ENCODE measurements at regions of chr2 and their contacts with region 1.

Region 1: GRCh38 chr2:121019071-121019470 is 265.9 kb downstream of the TFCP2L1 start:
- DNase-seq: peak in 2 of 5 donors; percentile 34 to 37
- ATAC-seq: peak in 3 of 4 donors; percentile 35 to 52 (median 48)
- H3K4me3 ChIP-seq: peak overlapping the region in 5 of 12 donors; percentile 11 to 33 (median 15)
- H3K27ac ChIP-seq: no peak overlapping the region
- H3K4me1 ChIP-seq: peaks cover 0 to 4% (median 0%) of the 10 kb centered on the region in 12 donors
- H3K27me3 ChIP-seq: peaks cover 0 to 10% (median 0%) of the 10 kb centered on the region in 9 donors
- CTCF ChIP-seq: no peak
- POLR2A ChIP-seq: no peak

Region 2: DNA sequence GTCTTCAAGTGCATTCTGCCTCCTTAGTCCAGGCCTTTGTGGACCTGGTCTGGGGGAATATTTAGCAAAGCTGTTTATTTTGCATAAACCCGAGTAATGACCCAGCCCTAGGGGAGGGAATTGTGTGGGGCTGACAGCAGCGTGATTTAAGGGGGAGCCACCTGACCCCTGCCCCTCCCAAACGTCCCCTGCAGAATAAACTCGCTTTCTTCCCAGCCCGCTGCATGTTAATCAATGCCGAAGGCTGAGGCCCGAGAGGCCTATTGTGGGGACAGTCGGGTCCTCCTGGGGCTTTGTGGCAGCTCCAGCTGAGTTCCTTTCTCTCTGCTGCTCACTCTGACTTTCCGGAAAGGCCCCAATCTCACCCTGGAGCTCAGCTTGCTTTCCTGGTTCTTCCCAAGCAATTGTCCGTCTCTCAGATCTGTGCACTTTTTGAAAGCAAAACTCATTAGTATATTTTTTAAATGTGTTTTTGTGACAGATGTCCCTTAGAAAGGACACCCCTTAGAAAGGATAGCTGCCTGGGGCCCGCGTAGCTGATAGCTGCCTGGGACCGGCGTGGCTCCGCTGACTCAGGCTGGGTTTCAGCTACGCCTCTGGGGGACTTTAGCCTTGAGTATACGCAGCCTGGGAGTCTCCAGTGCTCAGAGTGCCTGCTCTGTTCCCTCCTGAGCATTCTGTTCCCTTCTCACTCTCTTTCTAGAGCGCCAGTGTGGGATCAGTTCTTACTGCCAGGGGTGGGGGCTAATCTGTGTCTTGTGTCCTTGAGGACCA is 125.1 kb before region 1 on chr2:
- intact Hi-C with region 1: no loop called
- DNase-seq: peak in 1 of 5 donors; percentile 19
- ATAC-seq: peak in 1 of 4 donors; percentile 21
- H3K4me3 ChIP-seq: no peak overlapping the region
- H3K27ac ChIP-seq: peak overlapping the region in 3 of 12 donors; percentile 26 to 59 (median 49)
- H3K4me1 ChIP-seq: peaks cover 0 to 14% (median 6%) of the 10 kb centered on the region in 12 donors
- H3K27me3 ChIP-seq: no peaks in the 10 kb centered on the region
- CTCF ChIP-seq: no peak
- POLR2A ChIP-seq: no peak

Region 3: DNA sequence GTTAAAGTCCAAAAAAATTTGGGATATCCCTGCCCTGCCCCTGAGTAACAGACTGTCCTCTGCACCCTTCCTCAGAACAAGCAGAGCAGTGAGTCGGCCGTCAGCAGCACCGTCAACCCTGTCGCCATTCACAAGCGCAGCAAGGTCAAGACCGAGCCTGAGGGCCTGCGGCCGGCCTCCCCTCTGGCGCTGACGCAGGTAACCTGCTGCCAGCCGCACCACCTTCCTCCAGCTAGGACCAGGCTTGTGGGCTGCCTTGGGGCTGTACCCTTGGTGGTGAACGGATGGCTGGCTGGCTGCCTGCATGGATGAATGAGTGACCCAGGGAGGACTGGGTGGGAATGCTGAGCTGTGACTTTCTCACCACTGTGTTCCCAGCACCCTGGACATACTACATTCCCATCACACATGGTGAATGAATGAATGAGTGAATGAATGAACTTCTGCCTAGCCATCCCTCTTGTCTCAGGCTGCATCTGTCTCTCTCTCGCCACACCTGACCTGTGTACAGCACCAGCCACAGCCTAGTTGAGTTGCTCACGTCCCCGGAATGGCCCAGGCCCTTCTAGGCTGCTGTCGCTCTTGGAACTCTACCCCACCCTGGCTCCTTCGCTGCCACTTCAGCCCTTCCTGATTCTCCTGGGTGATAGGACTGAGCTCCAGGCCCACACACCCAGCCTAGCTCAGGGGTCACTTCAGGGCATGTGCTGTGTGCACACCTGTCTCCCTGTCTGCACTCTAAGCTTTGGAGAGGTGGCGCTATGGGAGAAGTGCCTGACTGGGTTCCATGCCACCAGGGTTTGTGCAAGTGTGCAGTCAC is 47.0 kb before region 1 on chr2:
- intact Hi-C with region 1: loop called in 1 of 10 experiments (anchors 2 kb)
- DNase-seq: peak in 1 of 5 donors; percentile 9
- ATAC-seq: no peak
- H3K4me3 ChIP-seq: no peak overlapping the region
- H3K27ac ChIP-seq: no peak overlapping the region
- H3K4me1 ChIP-seq: no peaks in the 10 kb centered on the region
- H3K27me3 ChIP-seq: no peaks in the 10 kb centered on the region
- CTCF ChIP-seq: no peak
- POLR2A ChIP-seq: no peak

Measured in heart left ventricle (tissue), 16 donors.